Heart left ventricle (tissue), 16 donors: ENCODE measurements at regions of chr3 and their contacts with region 1.

Region 1: GRCh38 chr3:50321336-50322114 is 1.0 kb downstream of the HYAL2 start:
- DNase-seq: peak; percentile 91 to 95 (median 93)
- ATAC-seq: peak; percentile 44 to 82 (median 68)
- H3K4me3 ChIP-seq: peak overlapping the region; percentile 62 to 97 (median 88)
- H3K27ac ChIP-seq: peak overlapping the region; percentile 93 to 99 (median 98)
- H3K4me1 ChIP-seq: peaks cover 5 to 85% (median 61%) of the 10 kb centered on the region in 12 donors
- H3K27me3 ChIP-seq: no peaks in the 10 kb centered on the region
- CTCF ChIP-seq: peak; percentile 27 to 80 (median 60)
- POLR2A ChIP-seq: peak in 1 of 2 donors; percentile 76

Region 2: DNA sequence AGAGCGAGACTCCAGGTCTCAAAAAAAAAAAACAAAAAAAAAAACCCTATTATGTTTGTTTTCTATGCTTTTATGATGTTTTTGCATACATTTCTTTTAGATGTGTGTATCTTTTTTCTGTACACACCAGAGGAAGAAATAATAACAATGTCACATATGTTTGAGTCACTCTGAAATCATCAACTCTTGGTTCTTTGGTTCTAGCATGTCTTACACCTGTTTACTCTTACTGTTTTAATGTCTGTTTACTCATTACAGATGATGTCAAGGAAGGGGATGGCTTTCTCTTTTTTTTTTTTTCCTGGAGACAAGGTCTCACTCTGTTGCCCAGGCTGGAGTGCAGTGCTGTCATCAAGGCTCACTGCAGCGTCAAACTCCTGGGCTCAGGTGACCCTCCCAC is 933.8 kb before region 1 on chr3:
- intact Hi-C with region 1: no loop called
- DNase-seq: no peak
- ATAC-seq: no peak
- H3K4me3 ChIP-seq: no peak overlapping the region
- H3K27ac ChIP-seq: no peak overlapping the region
- H3K4me1 ChIP-seq: peaks cover 4 to 86% (median 41%) of the 10 kb centered on the region in 12 donors
- H3K27me3 ChIP-seq: no peaks in the 10 kb centered on the region
- CTCF ChIP-seq: no peak
- POLR2A ChIP-seq: no peak

Region 3: DNA sequence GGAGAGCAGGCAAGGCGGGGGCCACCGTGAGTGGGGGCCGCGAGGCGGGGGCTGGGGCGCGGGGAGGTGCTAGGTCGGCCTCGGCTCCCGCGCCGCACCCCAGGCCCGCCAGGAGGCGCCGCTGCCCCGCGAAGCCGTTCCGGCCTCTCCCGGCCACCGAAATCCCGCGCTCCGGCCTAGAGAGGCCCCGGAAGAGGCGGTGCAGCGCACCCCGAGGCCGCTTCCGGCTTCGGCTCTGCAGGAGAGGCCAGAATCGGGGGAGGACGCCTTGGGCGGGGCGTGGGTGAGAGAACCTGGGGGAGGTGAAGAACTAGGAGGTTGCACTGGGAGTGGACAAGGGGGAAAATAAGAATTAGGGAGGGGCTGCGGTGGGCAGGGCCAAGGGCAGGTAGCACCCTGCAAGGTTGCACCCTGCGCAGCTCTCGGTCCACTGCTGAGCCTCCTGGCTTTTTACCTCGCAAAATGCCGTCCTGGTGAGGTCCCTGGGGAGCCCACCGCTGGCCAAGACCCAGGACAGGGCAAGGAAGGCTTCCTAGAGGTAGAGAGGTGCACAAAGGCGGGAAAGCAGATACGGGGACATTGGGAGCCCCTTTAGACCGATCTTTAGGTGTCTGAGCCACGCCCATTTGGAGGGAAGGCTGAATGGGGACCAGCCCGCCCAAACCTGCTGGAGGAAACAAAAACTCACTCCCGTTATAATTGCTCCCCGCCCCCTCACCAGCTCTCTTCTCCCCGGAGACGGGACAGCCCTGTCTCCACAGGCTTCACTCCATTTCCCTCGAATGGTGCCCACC is 93.9 kb before region 1 on chr3:
- intact Hi-C with region 1: loop called in 1 of 10 experiments (anchors 2 kb)
- DNase-seq: peak; percentile 91 to 97 (median 93)
- ATAC-seq: peak; percentile 87 to 94 (median 92)
- H3K4me3 ChIP-seq: peak overlapping the region; percentile 49 to 91 (median 69)
- H3K27ac ChIP-seq: peak overlapping the region in 11 of 12 donors; percentile 65 to 87 (median 76)
- H3K4me1 ChIP-seq: peaks cover 4 to 54% (median 17%) of the 10 kb centered on the region in 12 donors
- H3K27me3 ChIP-seq: no peaks in the 10 kb centered on the region
- CTCF ChIP-seq: peak; percentile 72 to 98 (median 94)
- POLR2A ChIP-seq: peak in 1 of 2 donors; percentile 45

Region 4: GRCh38 chr3:50260027-50260941 is 61.2 kb before region 1 on chr3:
- intact Hi-C with region 1: loop called in 2 of 10 experiments (anchors 5 to 10 kb)
- DNase-seq: peak; percentile 95 to 97 (median 96)
- ATAC-seq: peak; percentile 56 to 89 (median 80)
- H3K4me3 ChIP-seq: peak overlapping the region; percentile 50 to 79 (median 72)
- H3K27ac ChIP-seq: peak overlapping the region; percentile 88 to 100 (median 100)
- H3K4me1 ChIP-seq: peaks cover 0 to 65% (median 47%) of the 10 kb centered on the region in 12 donors
- H3K27me3 ChIP-seq: no peaks in the 10 kb centered on the region
- CTCF ChIP-seq: peak; percentile 95 to 99 (median 98)
- POLR2A ChIP-seq: peak in 1 of 2 donors; percentile 71

Region 5: GRCh38 chr3:50298836-50299637 is 22.5 kb before region 1 on chr3 and contains the starts of genes HYAL3 and NAA80:
- intact Hi-C with region 1: loop called in 6 of 10 experiments (anchors 1 to 2 kb)
- DNase-seq: peak; percentile 99
- ATAC-seq: peak; percentile 87 to 91 (median 88)
- H3K4me3 ChIP-seq: peak within 1 kb of the TSS; percentile 16 to 81 (median 67)
- H3K27ac ChIP-seq: peak within 1 kb of the TSS; percentile 75 to 97 (median 94)
- H3K4me1 ChIP-seq: peaks cover 11 to 58% (median 43%) of the 10 kb centered on the region in 12 donors
- H3K27me3 ChIP-seq: no peaks in the 10 kb centered on the region
- CTCF ChIP-seq: peak in 8 of 12 donors; percentile 17 to 48 (median 39)
- POLR2A ChIP-seq: peak; percentile 88 to 98
- total RNA-seq, gene HYAL3: 1.0 to 3.2 (median 1.6) TPM
- total RNA-seq, gene NAA80: 8.0 to 13.9 (median 9.8) TPM

Region 6: DNA sequence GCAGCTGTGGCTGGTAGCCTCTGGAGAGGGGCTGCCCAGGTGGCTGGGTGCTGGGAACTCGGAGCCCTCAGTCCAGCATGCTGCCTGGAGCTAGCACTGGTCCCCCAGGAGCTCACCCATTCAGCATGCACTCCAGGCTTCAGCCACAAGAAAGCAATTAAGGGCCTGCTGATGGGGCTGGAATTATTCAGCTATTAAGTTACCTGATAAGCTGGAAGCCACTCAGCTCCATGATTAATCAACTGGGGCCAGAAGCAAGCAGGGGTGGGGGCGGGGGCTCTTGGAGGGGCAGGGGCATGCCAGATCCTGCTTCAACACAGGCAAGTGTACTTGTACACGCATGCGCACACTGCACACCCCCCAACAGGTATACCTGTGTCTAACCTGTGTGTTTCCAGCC is 59.9 kb after region 1 on chr3:
- intact Hi-C with region 1: no loop called
- DNase-seq: no peak
- ATAC-seq: no peak
- H3K4me3 ChIP-seq: no peak overlapping the region
- H3K27ac ChIP-seq: no peak overlapping the region
- H3K4me1 ChIP-seq: no peaks in the 10 kb centered on the region
- H3K27me3 ChIP-seq: no peaks in the 10 kb centered on the region
- CTCF ChIP-seq: no peak
- POLR2A ChIP-seq: no peak